Left lung (tissue), 14 donors: ENCODE measurements at regions of chr12 and their contacts with region 1.

Region 1: GRCh38 chr12:6195665-6196535 is 4.3 kb upstream of the CD9 start:
- DNase-seq: peak; percentile 75 to 86 (median 84)
- ATAC-seq: peak; percentile 76
- H3K4me3 ChIP-seq: no peak overlapping the region
- H3K27ac ChIP-seq: peak overlapping the region in 1 of 2 donors; percentile 45
- H3K4me1 ChIP-seq: peaks cover 8 to 24% of the 10 kb centered on the region in 2 donors
- H3K27me3 ChIP-seq: peaks cover 0 to 32% of the 10 kb centered on the region in 2 donors
- CTCF ChIP-seq: peak; percentile 86 to 90

Region 2: GRCh38 chr12:6267139-6267721 is 71.3 kb after region 1 on chr12:
- intact Hi-C with region 1: loop called in 1 of 2 experiments (anchors 10 kb)
- DNase-seq: peak in 1 of 4 donors; percentile 76
- ATAC-seq: peak; percentile 48
- H3K4me3 ChIP-seq: no peak overlapping the region
- H3K27ac ChIP-seq: peak overlapping the region; percentile 40 to 71
- H3K4me1 ChIP-seq: peaks cover 0 to 7% of the 10 kb centered on the region in 2 donors
- H3K27me3 ChIP-seq: no peaks in the 10 kb centered on the region
- CTCF ChIP-seq: no peak

Region 3: DNA sequence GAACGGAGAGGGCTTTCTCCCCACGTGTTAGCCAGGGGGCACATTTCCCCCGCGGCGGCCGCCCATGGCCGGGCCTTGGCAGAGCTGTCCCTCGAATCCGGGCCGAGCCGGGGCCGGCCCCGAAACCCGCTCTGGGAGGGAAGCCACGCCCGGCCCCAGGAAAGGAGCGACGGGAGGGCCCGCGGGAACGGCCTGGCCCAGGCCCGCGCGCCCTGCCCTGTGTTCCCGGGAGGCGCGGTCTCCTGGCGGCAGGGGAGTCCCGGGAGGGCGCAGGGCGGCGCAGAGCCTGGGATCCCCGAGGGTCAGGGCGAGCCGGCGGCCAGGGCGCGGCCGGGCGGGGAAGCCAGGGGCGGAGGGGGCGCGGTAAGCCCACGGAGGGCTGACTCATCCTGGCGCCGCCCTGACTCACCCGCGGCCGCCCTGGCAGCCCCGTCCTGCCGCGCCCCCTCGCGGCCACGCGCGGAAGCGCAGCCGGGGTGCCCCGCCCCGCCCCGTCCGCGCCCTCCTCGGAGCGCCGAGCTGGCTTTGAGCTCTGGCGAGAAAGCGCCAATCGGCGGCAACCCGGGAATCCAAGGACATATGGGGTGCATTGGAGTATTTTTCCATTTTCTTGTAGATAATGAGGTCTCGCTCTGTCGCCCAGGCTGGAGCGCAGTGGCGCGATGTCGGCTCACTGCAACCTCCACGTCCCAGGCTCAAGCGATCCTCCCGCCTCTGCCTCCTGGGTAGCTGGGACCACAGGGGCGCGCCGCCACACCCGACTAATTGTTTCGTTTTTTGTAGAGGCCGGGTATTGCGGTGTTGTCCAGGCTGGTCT is 82.7 kb after region 1 on chr12:
- intact Hi-C with region 1: loop called in 1 of 2 experiments (anchors 5 kb)
- DNase-seq: peak; percentile 77 to 98 (median 86)
- ATAC-seq: peak; percentile 87
- H3K4me3 ChIP-seq: peak overlapping the region; percentile 39 to 45
- H3K27ac ChIP-seq: peak overlapping the region; percentile 88 to 91
- H3K4me1 ChIP-seq: peaks cover 27 to 52% of the 10 kb centered on the region in 2 donors
- H3K27me3 ChIP-seq: peaks cover 0 to 5% of the 10 kb centered on the region in 2 donors
- CTCF ChIP-seq: peak; percentile 97 to 98

Region 4: GRCh38 chr12:6914246-6914946 is 718.5 kb after region 1 on chr12 and contains the start of gene ENO2:
- intact Hi-C with region 1: no loop called
- DNase-seq: peak in 3 of 4 donors; percentile 69 to 92 (median 84)
- ATAC-seq: peak; percentile 92
- H3K4me3 ChIP-seq: peak within 1 kb of the TSS; percentile 44 to 58
- H3K27ac ChIP-seq: peak within 1 kb of the TSS; percentile 61 to 66
- H3K4me1 ChIP-seq: peaks cover 0 to 24% of the 10 kb centered on the region in 2 donors
- H3K27me3 ChIP-seq: peaks cover 0 to 40% of the 10 kb centered on the region in 2 donors
- CTCF ChIP-seq: no peak
- polyA plus RNA-seq, gene ENO2: 9.3 to 22.0 (median 14.3) TPM